WTC11 (cell line): ENCODE measurements at regions of chr16 and their contacts with region 1.

Region 1: DNA sequence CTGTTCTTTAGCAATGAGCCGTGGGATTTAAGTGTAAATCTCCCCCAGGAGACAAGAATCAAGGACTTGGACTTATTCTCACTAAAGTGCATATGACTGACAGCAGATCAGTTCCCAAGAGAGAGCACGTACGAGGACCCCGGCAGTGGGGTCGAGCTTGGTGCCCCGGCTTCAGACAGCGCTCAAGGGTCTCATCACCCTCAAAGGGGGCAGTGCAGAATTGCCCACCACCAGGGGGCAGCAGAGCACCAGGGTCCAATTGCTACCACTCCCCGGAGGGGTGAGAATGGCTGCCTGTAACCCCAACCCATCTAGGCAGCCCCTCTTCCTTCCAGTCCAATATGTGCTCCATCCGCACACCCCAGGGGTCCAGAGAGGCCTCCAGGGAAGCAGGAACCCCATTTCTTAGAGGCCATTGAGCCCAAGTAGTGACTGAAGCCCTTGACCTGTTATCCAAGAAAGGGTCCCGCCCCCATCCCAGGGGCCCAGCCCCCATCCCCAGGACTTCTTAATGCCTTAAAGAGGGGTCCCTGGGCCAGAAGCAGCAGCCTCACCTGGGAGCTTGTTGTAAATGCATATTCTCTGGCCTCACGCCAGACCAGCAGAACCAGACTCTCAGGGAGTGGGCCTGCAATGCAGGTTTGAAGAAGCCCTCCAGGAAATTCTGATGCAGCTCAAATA is 86.1 kb downstream of the ZDHHC7 start:
- DNase-seq: peak; percentile 94
- ATAC-seq: peak; percentile 87
- H3K4me3 Mint-ChIP-seq: no peak overlapping the region
- H3K27ac Mint-ChIP-seq: 0 out of 2 replicates have a peak overlapping the region, but pooled peaks have one; percentile 70
- H3K4me1 Mint-ChIP-seq: peaks cover 14% of the 10 kb centered on the region
- H3K27me3 Mint-ChIP-seq: no peaks in the 10 kb centered on the region
- CTCF ChIP-seq: peak; percentile 96

Region 2: GRCh38 chr16:84754353-84754856 is 170.8 kb before region 1 on chr16:
- CTCF ChIA-PET with region 1: interaction called, 18 read pairs
- POLR2A ChIA-PET with region 1: no interaction called
- DNase-seq: peak; percentile 65
- ATAC-seq: peak; percentile 88
- H3K4me3 Mint-ChIP-seq: no peak overlapping the region
- H3K27ac Mint-ChIP-seq: 0 out of 2 replicates have a peak overlapping the region, but pooled peaks have one; percentile 48
- H3K4me1 Mint-ChIP-seq: peaks cover 47% of the 10 kb centered on the region
- H3K27me3 Mint-ChIP-seq: no peaks in the 10 kb centered on the region
- CTCF ChIP-seq: peak; percentile 63

Region 3: GRCh38 chr16:84899414-84899813 is 25.8 kb before region 1 on chr16:
- CTCF ChIA-PET with region 1: no interaction called
- POLR2A ChIA-PET with region 1: no interaction called
- DNase-seq: no peak
- ATAC-seq: no peak
- H3K4me3 Mint-ChIP-seq: no peak overlapping the region
- H3K27ac Mint-ChIP-seq: no peak overlapping the region
- H3K4me1 Mint-ChIP-seq: peaks cover 4% of the 10 kb centered on the region; the same call in 1 of the 2 replicates
- H3K27me3 Mint-ChIP-seq: no peaks in the 10 kb centered on the region
- CTCF ChIP-seq: no peak

Region 4: GRCh38 chr16:84914273-84914672 is 11.0 kb before region 1 on chr16:
- CTCF ChIA-PET with region 1: interaction called, 22 read pairs
- POLR2A ChIA-PET with region 1: no interaction called
- DNase-seq: no peak
- ATAC-seq: no peak
- H3K4me3 Mint-ChIP-seq: no peak overlapping the region
- H3K27ac Mint-ChIP-seq: no peak overlapping the region
- H3K4me1 Mint-ChIP-seq: no peaks in the 10 kb centered on the region
- H3K27me3 Mint-ChIP-seq: no peaks in the 10 kb centered on the region
- CTCF ChIP-seq: no peak

Region 5: GRCh38 chr16:84964386-84965128 is 39.3 kb after region 1 on chr16:
- CTCF ChIA-PET with region 1: interaction called, 28 read pairs
- POLR2A ChIA-PET with region 1: no interaction called
- DNase-seq: no peak
- ATAC-seq: no peak
- H3K4me3 Mint-ChIP-seq: no peak overlapping the region
- H3K27ac Mint-ChIP-seq: no peak overlapping the region
- H3K4me1 Mint-ChIP-seq: peaks cover 8% of the 10 kb centered on the region
- H3K27me3 Mint-ChIP-seq: no peaks in the 10 kb centered on the region
- CTCF ChIP-seq: no peak

Region 6: GRCh38 chr16:84970447-84971127 is 45.4 kb after region 1 on chr16:
- CTCF ChIA-PET with region 1: interaction called, 84 read pairs
- POLR2A ChIA-PET with region 1: no interaction called
- DNase-seq: peak; percentile 88
- ATAC-seq: peak; percentile 96
- H3K4me3 Mint-ChIP-seq: no peak overlapping the region
- H3K27ac Mint-ChIP-seq: no peak overlapping the region
- H3K4me1 Mint-ChIP-seq: no peaks in the 10 kb centered on the region
- H3K27me3 Mint-ChIP-seq: no peaks in the 10 kb centered on the region
- CTCF ChIP-seq: peak; percentile 98